Psoas muscle (tissue), 8 donors: ENCODE measurements at regions of chr15 and their contacts with region 1.

Region 1: DNA sequence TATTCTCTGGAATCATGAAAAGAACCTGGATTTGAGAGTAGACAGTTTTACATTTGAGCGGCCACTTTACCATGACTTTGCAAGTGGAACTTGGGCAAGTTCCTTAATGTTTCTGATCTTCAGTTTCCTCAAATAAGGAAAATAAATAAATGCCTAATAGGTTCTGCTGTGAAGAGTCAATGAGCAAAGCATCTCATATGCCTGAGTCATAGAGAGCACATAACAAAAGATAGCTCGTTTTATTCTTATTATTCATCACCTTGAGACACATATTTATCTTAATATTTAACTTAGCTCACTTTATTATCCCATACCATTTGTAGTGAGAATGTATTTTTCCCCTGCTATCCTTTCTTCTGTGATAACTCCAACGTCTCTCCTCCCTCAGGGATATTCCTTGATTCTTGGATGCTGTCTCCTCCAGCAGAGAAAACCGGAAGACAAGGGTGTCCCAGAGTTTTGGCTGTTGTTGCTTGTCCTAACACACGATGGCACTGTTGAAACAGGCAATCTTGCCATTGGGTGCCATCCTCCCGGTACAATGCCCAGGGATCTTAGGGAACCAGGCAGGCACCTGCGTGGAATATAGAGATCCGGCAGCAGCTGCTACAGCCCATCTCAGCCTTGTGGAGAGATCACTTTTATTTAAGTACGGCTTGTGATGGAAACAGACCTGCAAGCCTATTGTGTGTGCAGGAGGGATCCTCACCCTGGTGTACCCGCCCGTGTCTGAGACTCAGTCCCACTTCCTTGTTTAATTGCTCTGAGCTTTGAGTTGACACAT is 33.3 kb upstream of the VPS33B start:
- DNase-seq: peak in 1 of 2 donors; percentile 46
- ATAC-seq: peak; percentile 89 to 95 (median 94)
- H3K4me3 ChIP-seq: no peak overlapping the region
- H3K27ac ChIP-seq: no peak overlapping the region
- H3K4me1 ChIP-seq: no peaks in the 10 kb centered on the region
- H3K27me3 ChIP-seq: peaks cover 0 to 28% (median 6%) of the 10 kb centered on the region in 3 donors
- CTCF ChIP-seq: peak; percentile 81

Region 2: DNA sequence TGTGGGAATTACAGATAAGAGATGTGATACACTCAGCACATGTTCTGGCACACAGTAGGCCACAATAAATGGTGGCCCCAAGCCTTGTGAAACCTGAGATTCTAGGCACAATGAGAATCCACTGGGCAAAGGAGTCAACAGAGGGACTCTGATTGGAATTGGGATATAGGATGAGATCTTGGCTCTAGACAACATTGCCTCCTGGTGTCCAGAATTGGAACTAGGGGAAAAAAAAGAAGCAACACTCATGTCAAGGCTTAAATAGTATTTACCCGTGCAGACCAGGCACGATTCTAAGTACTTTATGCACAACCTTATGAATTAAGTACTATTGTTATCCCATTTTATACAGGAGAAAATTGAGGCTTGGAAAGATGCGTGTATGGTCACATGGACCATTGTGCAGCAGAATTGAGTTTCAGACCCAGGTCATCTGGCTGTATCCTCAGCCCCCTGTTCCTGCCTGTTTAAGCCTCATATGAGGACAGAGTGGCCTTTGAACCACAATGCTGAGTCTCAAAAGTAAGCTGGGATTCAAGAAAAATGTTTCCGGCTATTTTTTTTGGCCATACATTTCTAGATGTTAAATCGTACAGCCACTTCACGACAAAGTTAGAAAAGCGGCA is 169.1 kb after region 1 on chr15:
- intact Hi-C with region 1: loop called (anchors 2 to 5 kb)
- DNase-seq: no peak
- ATAC-seq: peak in 3 of 4 donors; percentile 31 to 68 (median 52)
- H3K4me3 ChIP-seq: no peak overlapping the region
- H3K27ac ChIP-seq: no peak overlapping the region
- H3K4me1 ChIP-seq: no peaks in the 10 kb centered on the region
- H3K27me3 ChIP-seq: peaks cover 0 to 3% (median 0%) of the 10 kb centered on the region in 3 donors
- CTCF ChIP-seq: peak; percentile 67

Region 3: DNA sequence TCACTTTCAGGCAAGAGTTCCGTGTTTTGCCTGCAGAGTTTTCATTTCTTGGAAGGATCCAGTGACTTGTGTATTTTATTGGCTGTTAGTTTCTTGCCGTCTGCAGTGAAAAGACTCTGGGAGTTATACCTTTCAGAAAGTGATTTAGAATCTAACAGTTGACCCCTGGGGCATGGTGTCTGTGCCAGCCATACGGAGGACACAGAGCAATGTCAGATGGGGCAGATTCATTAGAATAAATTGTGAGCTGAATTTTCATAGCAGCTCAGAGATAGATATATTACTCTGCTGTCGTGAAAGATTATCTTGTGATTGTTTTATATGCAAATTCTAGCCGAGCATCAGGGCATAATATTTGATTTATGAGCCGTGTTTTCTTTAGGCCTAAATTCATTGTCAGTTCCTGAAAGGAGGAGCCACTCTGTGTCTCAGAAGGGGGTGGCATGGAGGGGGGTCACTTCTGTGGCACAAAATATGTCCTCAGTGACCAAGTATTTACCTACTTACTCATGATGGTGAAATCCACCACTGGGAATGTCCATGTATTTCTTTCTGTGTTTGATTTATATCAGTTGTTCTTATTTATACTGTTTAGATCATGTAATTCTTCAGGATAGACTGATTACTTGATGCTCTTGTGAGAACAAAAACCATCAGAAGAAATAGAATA is 176.1 kb after region 1 on chr15:
- intact Hi-C with region 1: loop called in 1 of 2 experiments (anchors 5 kb)
- DNase-seq: no peak
- ATAC-seq: no peak
- H3K4me3 ChIP-seq: no peak overlapping the region
- H3K27ac ChIP-seq: no peak overlapping the region
- H3K4me1 ChIP-seq: no peaks in the 10 kb centered on the region
- H3K27me3 ChIP-seq: peaks cover 0 to 4% (median 3%) of the 10 kb centered on the region in 3 donors
- CTCF ChIP-seq: no peak

Region 4: GRCh38 chr15:91271565-91272153 is 215.9 kb after region 1 on chr15:
- intact Hi-C with region 1: loop called (anchors 1 to 2 kb)
- DNase-seq: no peak
- ATAC-seq: peak; percentile 74 to 90 (median 78)
- H3K4me3 ChIP-seq: no peak overlapping the region
- H3K27ac ChIP-seq: no peak overlapping the region
- H3K4me1 ChIP-seq: no peaks in the 10 kb centered on the region
- H3K27me3 ChIP-seq: peaks cover 0 to 7% (median 0%) of the 10 kb centered on the region in 3 donors
- CTCF ChIP-seq: peak; percentile 85

Region 5: GRCh38 chr15:91737151-91737818 is 681.5 kb after region 1 on chr15:
- intact Hi-C with region 1: no loop called
- DNase-seq: no peak
- ATAC-seq: no peak
- H3K4me3 ChIP-seq: no peak overlapping the region
- H3K27ac ChIP-seq: no peak overlapping the region
- H3K4me1 ChIP-seq: no peaks in the 10 kb centered on the region
- H3K27me3 ChIP-seq: peaks cover 0 to 3% (median 0%) of the 10 kb centered on the region in 3 donors
- CTCF ChIP-seq: no peak